ENCODE measurements at regions of chr20 and their contacts with region 1.

Region 1: GRCh38 chr20:62143118-62143973 is at the starts of genes PSMA7 and SS18L1:
- DNase-seq: peak; percentile 88
- H3K4me3 Mint-ChIP-seq: peak within 1 kb of the TSS; percentile 93
- H3K27ac Mint-ChIP-seq: peak within 1 kb of the TSS; percentile 94
- H3K4me1 Mint-ChIP-seq: peaks cover 52% of the 10 kb centered on the region
- H3K27me3 Mint-ChIP-seq: no peaks in the 10 kb centered on the region
- total RNA-seq, gene PSMA7: 301 to 316 TPM
- total RNA-seq, gene SS18L1: 13.7 to 15.2 TPM

Region 2: GRCh38 chr20:62010551-62011402 is 132.6 kb before region 1 on chr20:
- CTCF ChIA-PET with region 1: interaction called, 16 read pairs
- POLR2A ChIA-PET with region 1: no interaction called
- intact Hi-C with region 1: no loop called
- DNase-seq: peak; percentile 71
- H3K4me3 Mint-ChIP-seq: no peak overlapping the region
- H3K27ac Mint-ChIP-seq: no peak overlapping the region
- H3K4me1 Mint-ChIP-seq: peaks cover 7% of the 10 kb centered on the region
- H3K27me3 Mint-ChIP-seq: no peaks in the 10 kb centered on the region

Region 3: GRCh38 chr20:62065669-62066338 is 77.5 kb before region 1 on chr20 and contains the start of gene TAF4:
- CTCF ChIA-PET with region 1: interaction called, 4 read pairs
- POLR2A ChIA-PET with region 1: interaction called, 11 read pairs
- intact Hi-C with region 1: no loop called
- DNase-seq: peak; percentile 83
- H3K4me3 Mint-ChIP-seq: peak within 1 kb of the TSS; percentile 79
- H3K27ac Mint-ChIP-seq: peak within 1 kb of the TSS; percentile 71
- H3K4me1 Mint-ChIP-seq: peaks cover 48% of the 10 kb centered on the region
- H3K27me3 Mint-ChIP-seq: no peaks in the 10 kb centered on the region
- total RNA-seq, gene TAF4: 15.3 to 17.0 TPM

Region 4: GRCh38 chr20:62121776-62122631 is 21.3 kb before region 1 on chr20 and contains the start of gene LSM14B:
- CTCF ChIA-PET with region 1: interaction called, 16 read pairs
- POLR2A ChIA-PET with region 1: interaction called, 15 read pairs
- intact Hi-C with region 1: loop called (anchors 1 kb)
- DNase-seq: peak; percentile 97
- H3K4me3 Mint-ChIP-seq: peak within 1 kb of the TSS; percentile 86
- H3K27ac Mint-ChIP-seq: peak within 1 kb of the TSS; percentile 95
- H3K4me1 Mint-ChIP-seq: peaks cover 49% of the 10 kb centered on the region
- H3K27me3 Mint-ChIP-seq: no peaks in the 10 kb centered on the region
- total RNA-seq, gene LSM14B: 33.4 to 35.1 TPM

Region 5: GRCh38 chr20:62156592-62157386 is 13.4 kb after region 1 on chr20:
- CTCF ChIA-PET with region 1: interaction called, 9 read pairs
- POLR2A ChIA-PET with region 1: interaction called, 4 read pairs
- intact Hi-C with region 1: loop called (anchors 2 kb)
- DNase-seq: peak; percentile 81
- H3K4me3 Mint-ChIP-seq: no peak overlapping the region
- H3K27ac Mint-ChIP-seq: no peak overlapping the region
- H3K4me1 Mint-ChIP-seq: peaks cover 25% of the 10 kb centered on the region
- H3K27me3 Mint-ChIP-seq: no peaks in the 10 kb centered on the region

Region 6: GRCh38 chr20:62237801-62238571 is 94.6 kb after region 1 on chr20 and contains the start of gene OSBPL2:
- CTCF ChIA-PET with region 1: no interaction called
- POLR2A ChIA-PET with region 1: no interaction called
- intact Hi-C with region 1: loop called (anchors 1 kb)
- DNase-seq: peak; percentile 100
- H3K4me3 Mint-ChIP-seq: peak within 1 kb of the TSS; percentile 78
- H3K27ac Mint-ChIP-seq: peak within 1 kb of the TSS; percentile 80
- H3K4me1 Mint-ChIP-seq: peaks cover 37% of the 10 kb centered on the region
- H3K27me3 Mint-ChIP-seq: no peaks in the 10 kb centered on the region
- total RNA-seq, gene OSBPL2: 25.4 to 29.3 TPM

Region 7: GRCh38 chr20:62386383-62387218 is 243.3 kb after region 1 on chr20 and contains the start of gene RPS21:
- CTCF ChIA-PET with region 1: no interaction called
- POLR2A ChIA-PET with region 1: no interaction called
- intact Hi-C with region 1: loop called (anchors 5 kb)
- DNase-seq: peak; percentile 95
- H3K4me3 Mint-ChIP-seq: peak within 1 kb of the TSS; percentile 90
- H3K27ac Mint-ChIP-seq: peak within 1 kb of the TSS; percentile 87
- H3K4me1 Mint-ChIP-seq: peaks cover 42% of the 10 kb centered on the region
- H3K27me3 Mint-ChIP-seq: no peaks in the 10 kb centered on the region
- total RNA-seq, gene RPS21: 2,488 to 2,529 TPM